ENCODE measurements at regions of chr14 and their contacts with region 1.

Region 1: GRCh38 chr14:44961604-44962333 is at the starts of genes KLHL28 and TOGARAM1:
- DNase-seq: peak; percentile 79 to 97 (median 84)
- ATAC-seq: peak; percentile 89
- H3K4me3 ChIP-seq: peak within 1 kb of the TSS; percentile 53
- H3K27ac ChIP-seq: peak within 1 kb of the TSS; percentile 77
- H3K4me1 ChIP-seq: no peaks in the 10 kb centered on the region; a peak in 3 of 5 replicates
- H3K27me3 ChIP-seq: no peaks in the 10 kb centered on the region
- CTCF ChIP-seq: no peak
- EP300 ChIP-seq: no peak
- POLR2A ChIP-seq: peak; percentile 87
- RAD21 ChIP-seq: no peak
- polyA plus RNA-seq, gene KLHL28: 4.8 to 7.5 TPM
- polyA plus RNA-seq, gene TOGARAM1: 1.3 to 1.6 TPM

Region 2: GRCh38 chr14:44912041-44912869 is 49.5 kb before region 1 on chr14:
- CTCF ChIA-PET with region 1: no interaction called
- POLR2A ChIA-PET with region 1: no interaction called
- in situ Hi-C with region 1: no loop called
- intact Hi-C with region 1: loop called (anchors 5 kb)
- DNase-seq: no peak
- ATAC-seq: no peak
- H3K4me3 ChIP-seq: no peak overlapping the region
- H3K27ac ChIP-seq: no peak overlapping the region
- H3K4me1 ChIP-seq: no peaks in the 10 kb centered on the region; a peak in 1 of 5 replicates
- H3K27me3 ChIP-seq: no peaks in the 10 kb centered on the region
- CTCF ChIP-seq: no peak
- EP300 ChIP-seq: no peak
- POLR2A ChIP-seq: no peak
- RAD21 ChIP-seq: no peak

Region 3: DNA sequence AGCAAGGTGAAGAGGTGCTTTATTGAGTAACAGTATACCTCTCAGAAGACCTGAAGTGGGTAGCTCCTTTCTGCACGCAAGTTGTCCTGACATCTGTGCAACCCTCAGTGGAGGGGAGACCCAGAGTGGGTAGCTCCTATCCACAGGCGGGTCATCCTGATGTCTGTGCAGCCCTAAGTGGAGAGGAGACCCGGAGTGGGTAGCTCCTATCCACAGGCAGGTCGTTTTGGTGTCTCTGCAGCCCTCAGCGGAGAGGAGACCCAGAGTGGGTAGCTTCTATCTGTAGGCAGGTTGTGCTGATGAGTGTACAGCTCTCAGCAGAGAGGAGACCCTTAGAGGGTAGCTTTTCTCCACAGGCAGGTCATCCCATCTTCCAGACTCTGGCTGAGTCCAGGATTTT is 77.1 kb after region 1 on chr14:
- CTCF ChIA-PET with region 1: no interaction called
- POLR2A ChIA-PET with region 1: no interaction called
- in situ Hi-C with region 1: no loop called
- intact Hi-C with region 1: no loop called
- DNase-seq: peak in 1 of 4 experiments; percentile 4
- ATAC-seq: no peak
- H3K4me3 ChIP-seq: no peak overlapping the region
- H3K27ac ChIP-seq: no peak overlapping the region
- H3K4me1 ChIP-seq: no peaks in the 10 kb centered on the region
- H3K27me3 ChIP-seq: no peaks in the 10 kb centered on the region
- CTCF ChIP-seq: no peak
- EP300 ChIP-seq: no peak
- POLR2A ChIP-seq: no peak
- RAD21 ChIP-seq: no peak

Region 4: GRCh38 chr14:45083971-45084722 is 122.4 kb after region 1 on chr14 and contains the start of gene PRPF39:
- CTCF ChIA-PET with region 1: no interaction called
- POLR2A ChIA-PET with region 1: no interaction called
- in situ Hi-C with region 1: no loop called
- intact Hi-C with region 1: loop called (anchors 2 kb)
- DNase-seq: peak; percentile 93 to 94 (median 94)
- ATAC-seq: peak; percentile 90
- H3K4me3 ChIP-seq: peak within 1 kb of the TSS; percentile 77
- H3K27ac ChIP-seq: peak within 1 kb of the TSS; percentile 83
- H3K4me1 ChIP-seq: no peaks in the 10 kb centered on the region; a peak in 2 of 5 replicates
- H3K27me3 ChIP-seq: no peaks in the 10 kb centered on the region
- CTCF ChIP-seq: no peak
- EP300 ChIP-seq: no peak
- POLR2A ChIP-seq: peak; percentile 88
- RAD21 ChIP-seq: no peak
- polyA plus RNA-seq, gene PRPF39: 13.3 to 21.2 TPM

Region 5: DNA sequence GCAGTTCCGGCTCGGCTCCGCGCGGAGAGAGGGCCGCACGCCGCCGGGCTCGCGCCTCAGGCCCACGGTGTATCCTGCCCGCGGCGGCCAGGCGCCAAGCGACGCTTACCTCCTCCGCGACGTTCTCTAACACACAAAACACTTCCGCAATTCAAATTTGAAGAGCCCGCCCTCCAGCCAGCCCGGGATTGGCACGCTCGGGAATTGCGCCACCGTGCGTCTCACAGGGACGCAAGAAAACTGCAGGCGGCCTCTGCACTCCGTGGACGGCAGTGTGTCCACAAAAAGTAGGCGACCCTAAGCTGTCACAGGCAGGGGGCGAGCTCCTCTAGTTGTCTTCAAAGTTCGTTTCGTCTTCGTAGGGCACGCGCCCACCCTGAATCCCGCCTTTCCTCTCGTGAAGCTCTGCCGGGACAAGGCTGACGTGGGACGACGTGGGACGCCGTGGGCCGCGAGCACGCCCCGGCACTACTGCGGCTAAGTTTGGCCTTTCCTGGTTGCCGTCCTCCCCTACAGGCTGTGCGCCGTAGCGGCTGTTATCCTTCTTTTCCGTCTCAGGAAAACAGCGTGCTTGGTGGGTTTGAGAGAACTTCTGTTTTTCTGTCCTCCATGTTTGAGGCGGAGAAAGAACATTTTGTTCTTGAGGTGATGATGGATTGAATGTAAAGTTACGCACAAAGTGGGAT is 291.4 kb after region 1 on chr14 and contains the start of gene MIS18BP1:
- CTCF ChIA-PET with region 1: no interaction called
- POLR2A ChIA-PET with region 1: no interaction called
- in situ Hi-C with region 1: no loop called
- intact Hi-C with region 1: loop called (anchors 5 kb)
- DNase-seq: peak; percentile 67 to 91 (median 75)
- ATAC-seq: peak; percentile 94
- H3K4me3 ChIP-seq: peak within 1 kb of the TSS; percentile 81
- H3K27ac ChIP-seq: peak within 1 kb of the TSS; percentile 86
- H3K4me1 ChIP-seq: peaks cover 7 to 12% of the 10 kb centered on the region in 2 experiments; a peak in 3 of 5 replicates
- H3K27me3 ChIP-seq: no peaks in the 10 kb centered on the region
- CTCF ChIP-seq: peak; percentile 68 to 78 (median 76)
- EP300 ChIP-seq: 0 out of 2 replicates have a peak, but pooled peaks have one; percentile 15
- POLR2A ChIP-seq: peak; percentile 75
- RAD21 ChIP-seq: peak; percentile 11 to 27; a peak in 3 of 4 replicates
- polyA plus RNA-seq, gene MIS18BP1: 5.0 to 5.5 TPM

Measured in K562 (cell line).